ENCODE measurements at regions of chr12 and their contacts with region 1.

Region 1: DNA sequence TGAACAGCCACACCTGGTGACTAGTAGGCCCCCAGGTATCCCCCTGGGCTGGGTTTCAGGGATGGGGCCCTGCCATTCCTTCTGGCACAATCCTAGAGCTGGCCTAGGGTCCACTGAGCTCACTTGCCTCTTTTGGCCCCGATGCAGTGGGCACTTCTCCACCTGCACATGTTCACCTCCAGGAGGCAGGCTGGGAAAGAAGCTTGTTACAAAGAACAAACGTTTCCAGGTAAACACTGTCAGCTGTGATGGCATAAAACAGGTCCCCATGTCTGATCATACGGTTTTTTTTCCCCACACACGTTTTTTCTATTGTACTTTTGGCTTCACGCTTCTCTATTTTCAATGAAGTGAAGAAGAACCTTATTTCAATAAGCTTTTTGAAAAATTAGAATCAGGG is 15.8 kb upstream of the HVCN1 start:
- DNase-seq: no peak
- ATAC-seq: peak; percentile 36
- H3K4me3 Mint-ChIP-seq: no peak overlapping the region
- H3K27ac Mint-ChIP-seq: no peak overlapping the region
- H3K4me1 Mint-ChIP-seq: no peaks in the 10 kb centered on the region
- H3K27me3 Mint-ChIP-seq: no peaks in the 10 kb centered on the region

Region 2: DNA sequence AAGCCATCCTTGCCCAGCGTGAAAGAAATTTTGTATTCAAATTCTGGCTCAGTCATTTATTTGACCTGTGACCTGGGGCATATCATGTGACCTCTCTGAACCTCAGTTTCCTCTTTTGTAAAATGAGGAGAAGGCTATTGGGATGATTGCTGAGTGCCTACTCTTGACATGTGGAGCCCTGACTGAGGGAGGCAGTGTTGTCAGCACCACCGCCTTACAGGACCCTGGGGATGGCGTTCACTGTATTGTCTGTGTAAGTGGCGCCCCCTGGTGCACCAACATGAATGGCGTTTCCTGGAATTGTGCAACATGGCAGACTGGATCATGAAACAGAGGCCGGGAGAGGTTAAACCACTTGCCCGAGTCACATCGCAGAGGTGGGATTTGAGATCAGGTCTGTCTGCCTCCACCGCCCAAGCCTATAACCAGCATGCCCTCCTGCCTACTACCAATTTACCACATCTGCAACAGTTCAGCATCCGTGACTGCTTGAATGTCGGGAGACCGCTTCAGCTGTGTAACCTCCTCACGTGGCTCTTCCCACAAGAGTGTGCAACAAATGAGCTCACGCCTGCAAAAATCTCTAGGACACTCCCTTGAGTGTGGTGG is 121.9 kb after region 1 on chr12:
- CTCF ChIA-PET with region 1: interaction called, 15 read pairs
- DNase-seq: peak; percentile 90
- ATAC-seq: peak; percentile 94
- H3K4me3 Mint-ChIP-seq: no peak overlapping the region
- H3K27ac Mint-ChIP-seq: no peak overlapping the region
- H3K4me1 Mint-ChIP-seq: peaks cover 9% of the 10 kb centered on the region
- H3K27me3 Mint-ChIP-seq: peaks cover 3% of the 10 kb centered on the region